ENCODE measurements at regions of chr6 and their contacts with region 1.

Region 1: GRCh38 chr6:104928141-104928540 is 28.8 kb upstream of the LIN28B start:
- DNase-seq: no peak
- H3K4me3 ChIP-seq: no peak overlapping the region
- H3K4me1 ChIP-seq: no peaks in the 10 kb centered on the region
- H3K27me3 ChIP-seq: peaks cover under 1% of the 10 kb centered on the region; the same call in 1 of the 2 replicates

Region 2: GRCh38 chr6:105077596-105078385 is 149.7 kb after region 1 on chr6:
- in situ Hi-C with region 1: loop called (anchors 10 kb)
- DNase-seq: peak in 1 of 2 experiments; percentile 49
- H3K4me3 ChIP-seq: no peak overlapping the region
- H3K4me1 ChIP-seq: peaks cover 5% of the 10 kb centered on the region; the same call in 1 of the 2 replicates
- H3K27me3 ChIP-seq: no peaks in the 10 kb centered on the region